PC-3 (cell line): ENCODE measurements at regions of chr11 and their contacts with region 1.

Region 1: DNA sequence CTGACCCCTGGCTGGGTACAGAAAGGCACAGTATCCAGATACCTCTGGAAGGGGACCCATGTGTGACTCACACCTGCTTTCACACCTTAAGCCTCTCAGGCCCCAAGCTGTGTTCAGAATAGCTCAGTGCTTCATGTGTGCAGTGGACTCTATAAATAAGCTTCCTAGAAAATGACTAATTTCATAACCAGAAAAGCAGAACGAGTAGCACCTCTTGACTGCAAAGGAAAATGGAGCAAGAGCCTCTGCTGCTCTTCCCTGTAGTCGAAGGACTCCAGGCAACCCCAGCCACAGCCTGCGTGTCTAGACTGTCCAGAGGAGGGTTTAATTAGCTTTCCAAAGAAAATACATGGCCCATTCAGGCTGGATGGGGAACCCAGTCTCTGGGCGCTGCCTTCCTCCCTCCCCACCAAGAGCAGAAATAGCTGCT is 23.1 kb downstream of the PTPN5 start:
- DNase-seq: no peak
- ATAC-seq: no peak
- H3K4me3 ChIP-seq: no peak overlapping the region
- H3K27ac ChIP-seq: no peak overlapping the region
- H3K4me1 ChIP-seq: peaks cover 11% of the 10 kb centered on the region
- H3K27me3 ChIP-seq: no peaks in the 10 kb centered on the region
- CTCF ChIP-seq: no peak

Region 2: DNA sequence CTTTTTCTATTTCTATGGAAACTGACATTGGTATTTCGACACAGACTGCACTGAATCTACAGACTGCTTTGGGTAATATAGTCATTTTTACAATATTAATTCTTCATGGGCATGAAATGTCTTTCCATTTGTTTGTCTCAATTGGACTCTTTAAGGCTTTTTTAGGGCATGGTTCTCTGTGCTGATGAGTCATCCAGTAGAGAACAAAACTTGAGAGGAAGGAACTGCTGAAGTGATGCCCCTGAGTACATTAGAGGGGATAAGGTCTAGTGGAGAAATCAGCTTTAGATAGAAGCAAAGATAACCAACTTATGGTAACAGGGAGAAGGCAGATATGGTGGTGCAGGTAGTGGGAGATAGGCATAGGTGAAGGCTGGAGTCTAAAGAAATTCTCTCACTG is 266.9 kb before region 1 on chr11:
- CTCF ChIA-PET with region 1: no interaction called
- POLR2A ChIA-PET with region 1: interaction called, 11 read pairs
- intact Hi-C with region 1: no loop called
- DNase-seq: no peak
- ATAC-seq: no peak
- H3K4me3 ChIP-seq: no peak overlapping the region
- H3K27ac ChIP-seq: no peak overlapping the region
- H3K4me1 ChIP-seq: no peaks in the 10 kb centered on the region
- H3K27me3 ChIP-seq: no peaks in the 10 kb centered on the region
- CTCF ChIP-seq: no peak

Region 3: GRCh38 chr11:18540207-18541009 is 228.1 kb before region 1 on chr11:
- CTCF ChIA-PET with region 1: interaction called, 10 read pairs
- POLR2A ChIA-PET with region 1: no interaction called
- intact Hi-C with region 1: loop called (anchors 1 kb)
- DNase-seq: peak; percentile 57
- ATAC-seq: peak; percentile 88
- H3K4me3 ChIP-seq: no peak overlapping the region
- H3K27ac ChIP-seq: no peak overlapping the region
- H3K4me1 ChIP-seq: no peaks in the 10 kb centered on the region
- H3K27me3 ChIP-seq: no peaks in the 10 kb centered on the region
- CTCF ChIP-seq: peak; percentile 80

Region 4: GRCh38 chr11:18634140-18635032 is 134.1 kb before region 1 on chr11 and contains the start of gene SPTY2D1:
- CTCF ChIA-PET with region 1: no interaction called
- POLR2A ChIA-PET with region 1: no interaction called
- intact Hi-C with region 1: loop called (anchors 1 kb)
- DNase-seq: peak; percentile 98
- ATAC-seq: peak; percentile 94
- H3K4me3 ChIP-seq: peak within 1 kb of the TSS; percentile 86
- H3K27ac ChIP-seq: peak within 1 kb of the TSS; percentile 64
- H3K4me1 ChIP-seq: peaks cover 10% of the 10 kb centered on the region
- H3K27me3 ChIP-seq: no peaks in the 10 kb centered on the region
- CTCF ChIP-seq: no peak
- total RNA-seq, gene SPTY2D1: 15.6 and 16.6 TPM in 2 replicates

Region 5: DNA sequence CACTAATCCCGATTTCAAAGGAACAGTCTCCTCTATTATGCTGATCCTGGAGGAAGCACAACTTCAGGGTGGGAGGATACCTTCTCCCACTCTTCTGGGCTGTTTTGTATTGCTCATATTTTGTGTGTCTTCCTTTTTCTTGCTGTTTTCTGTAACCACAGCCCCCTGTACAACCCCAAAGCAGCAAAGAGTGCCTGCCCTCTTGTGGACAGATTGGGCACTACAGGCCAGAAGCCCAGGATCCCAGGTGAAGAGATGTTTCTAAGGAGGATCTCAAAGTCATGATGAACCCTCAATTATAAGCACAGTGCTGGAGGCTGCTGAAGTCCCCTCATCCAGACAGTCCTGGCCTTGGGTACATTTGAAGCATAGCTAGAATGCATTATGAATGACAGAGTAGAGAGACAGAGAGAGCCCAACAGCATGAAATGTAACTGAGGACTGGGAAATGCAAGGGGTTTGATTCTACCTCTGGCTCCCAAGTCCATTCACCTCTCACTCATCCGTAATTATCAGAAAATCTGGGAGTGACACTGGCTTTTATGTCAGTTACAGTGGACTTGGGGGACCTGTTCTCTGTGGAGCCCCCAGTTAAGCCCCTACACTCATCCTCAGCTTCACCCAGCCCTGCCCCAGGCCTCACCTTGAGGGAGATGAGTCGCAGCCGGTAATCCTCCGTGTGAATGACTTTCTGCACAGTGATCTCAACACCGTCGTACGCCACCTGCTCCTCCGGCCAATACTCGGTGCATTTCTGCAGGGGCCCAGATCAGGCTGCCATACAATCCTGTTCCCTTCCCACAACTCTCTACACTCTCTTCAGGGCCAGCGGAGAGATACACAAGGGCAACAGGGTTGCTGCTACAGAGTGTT is 36.3 kb before region 1 on chr11:
- CTCF ChIA-PET with region 1: no interaction called
- POLR2A ChIA-PET with region 1: no interaction called
- intact Hi-C with region 1: loop called (anchors 1 kb)
- DNase-seq: peak; percentile 70
- ATAC-seq: peak; percentile 81
- H3K4me3 ChIP-seq: no peak overlapping the region
- H3K27ac ChIP-seq: no peak overlapping the region
- H3K4me1 ChIP-seq: no peaks in the 10 kb centered on the region; the same call in 1 of the 2 replicates
- H3K27me3 ChIP-seq: no peaks in the 10 kb centered on the region
- CTCF ChIP-seq: peak; percentile 96

Region 6: GRCh38 chr11:18749697-18750319 is 18.7 kb before region 1 on chr11:
- CTCF ChIA-PET with region 1: interaction called, 15 read pairs
- POLR2A ChIA-PET with region 1: no interaction called
- intact Hi-C with region 1: no loop called
- DNase-seq: peak; percentile 82
- ATAC-seq: peak; percentile 99
- H3K4me3 ChIP-seq: no peak overlapping the region
- H3K27ac ChIP-seq: peak overlapping the region; percentile 68
- H3K4me1 ChIP-seq: peaks cover 16% of the 10 kb centered on the region
- H3K27me3 ChIP-seq: no peaks in the 10 kb centered on the region
- CTCF ChIP-seq: no peak